Esophagus squamous epithelium (tissue), 5 donors: ENCODE measurements at regions of chr1 and their contacts with region 1.

Region 1: GRCh38 chr1:54996359-54996868 is 2.3 kb upstream of the BSND start:
- DNase-seq: no peak
- H3K4me3 ChIP-seq: peak overlapping the region in 2 of 4 donors; percentile 19 to 33
- H3K27ac ChIP-seq: no peak overlapping the region
- H3K4me1 ChIP-seq: peaks cover 6 to 13% (median 7%) of the 10 kb centered on the region in 3 donors
- H3K27me3 ChIP-seq: peaks cover 0 to 58% (median 1%) of the 10 kb centered on the region in 4 donors
- CTCF ChIP-seq: peak; percentile 79 to 89 (median 85)
- POLR2A ChIP-seq: no peak

Region 2: GRCh38 chr1:54950369-54951163 is 45.8 kb before region 1 on chr1:
- intact Hi-C with region 1: loop called (anchors 5 kb)
- DNase-seq: no peak
- H3K4me3 ChIP-seq: peak overlapping the region in 3 of 4 donors; percentile 17 to 41 (median 27)
- H3K27ac ChIP-seq: peak overlapping the region; percentile 33 to 76 (median 71)
- H3K4me1 ChIP-seq: peaks cover 7 to 35% (median 7%) of the 10 kb centered on the region in 3 donors
- H3K27me3 ChIP-seq: no peaks in the 10 kb centered on the region
- CTCF ChIP-seq: peak; percentile 38 to 91 (median 82)
- POLR2A ChIP-seq: no peak

Region 3: GRCh38 chr1:55478742-55479141 is 482.3 kb after region 1 on chr1:
- intact Hi-C with region 1: no loop called
- DNase-seq: no peak
- H3K4me3 ChIP-seq: no peak overlapping the region
- H3K27ac ChIP-seq: no peak overlapping the region
- H3K4me1 ChIP-seq: peaks cover 0 to 3% (median 0%) of the 10 kb centered on the region in 3 donors
- H3K27me3 ChIP-seq: no peaks in the 10 kb centered on the region
- CTCF ChIP-seq: peak in 2 of 6 experiments; percentile 7 to 50
- POLR2A ChIP-seq: no peak